Endothelial cell of umbilical vein (primary cell): ENCODE measurements at regions of chr1 and their contacts with region 1.

Region 1: DNA sequence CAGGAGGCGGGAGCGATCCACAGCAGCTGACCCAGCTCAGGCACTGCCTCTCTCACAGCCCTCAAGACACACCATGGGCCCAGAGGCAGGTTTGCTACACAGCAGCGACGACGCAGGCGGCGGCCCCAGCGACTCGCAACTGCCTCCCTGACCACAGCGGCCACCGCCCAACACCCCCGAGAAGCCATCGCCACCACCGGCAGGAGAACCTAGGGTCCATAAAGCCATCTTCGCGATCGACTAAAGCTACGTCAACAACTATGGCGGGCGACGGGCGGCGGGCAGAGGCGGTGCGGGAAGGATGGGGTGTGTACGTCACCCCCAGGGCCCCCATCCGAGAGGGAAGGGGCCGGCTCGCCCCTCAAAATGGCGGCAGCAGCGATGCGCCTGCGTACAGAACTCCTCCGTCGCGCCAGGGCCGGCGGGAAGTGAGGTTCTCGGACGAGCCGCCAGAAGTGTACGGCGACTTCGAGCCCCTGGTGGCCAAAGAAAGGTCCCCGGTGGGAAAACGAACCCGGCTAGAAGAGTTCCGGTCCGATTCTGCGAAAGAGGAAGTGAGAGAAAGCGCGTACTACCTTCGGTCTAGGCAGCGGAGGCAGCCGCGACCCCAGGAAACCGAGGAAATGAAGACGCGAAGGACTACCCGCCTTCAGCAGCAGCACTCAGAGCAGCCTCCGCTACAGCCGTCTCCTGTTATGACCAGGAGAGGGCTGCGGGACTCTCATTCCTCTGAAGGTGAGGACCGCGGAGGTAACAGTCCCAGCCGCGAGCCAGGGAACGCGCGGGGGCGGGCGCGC is at the start of gene TOR1AIP1:
- DNase-seq: peak; percentile 99
- H3K4me3 ChIP-seq: peak within 1 kb of the TSS; percentile 71 to 93 (median 76)
- H3K27ac ChIP-seq: peak within 1 kb of the TSS; percentile 91
- H3K4me1 ChIP-seq: peaks cover 15% of the 10 kb centered on the region
- H3K27me3 ChIP-seq: no peaks in the 10 kb centered on the region
- CTCF ChIP-seq: peak; percentile 11 to 45
- POLR2A ChIP-seq: peak; percentile 18
- total RNA-seq, gene TOR1AIP1: 28.8 and 30.2 TPM in 2 replicates

Region 2: GRCh38 chr1:179941454-179941853 is 59.0 kb after region 1 on chr1:
- CTCF ChIA-PET with region 1: no interaction called
- POLR2A ChIA-PET with region 1: no interaction called
- dilution Hi-C with region 1: no loop called
- intact Hi-C with region 1: no loop called
- DNase-seq: no peak
- H3K4me3 ChIP-seq: no peak overlapping the region
- H3K27ac ChIP-seq: no peak overlapping the region
- H3K4me1 ChIP-seq: no peaks in the 10 kb centered on the region
- H3K27me3 ChIP-seq: no peaks in the 10 kb centered on the region
- CTCF ChIP-seq: no peak
- POLR2A ChIP-seq: no peak

Region 3: GRCh38 chr1:179954493-179955297 is 72.3 kb after region 1 on chr1 and contains the start of gene CEP350:
- CTCF ChIA-PET with region 1: interaction called, 3 read pairs
- POLR2A ChIA-PET with region 1: interaction called, 4 read pairs
- dilution Hi-C with region 1: no loop called
- intact Hi-C with region 1: loop called (anchors 1 kb)
- DNase-seq: peak; percentile 99
- H3K4me3 ChIP-seq: peak within 1 kb of the TSS; percentile 88 to 95 (median 95)
- H3K27ac ChIP-seq: peak within 1 kb of the TSS; percentile 55
- H3K4me1 ChIP-seq: peaks cover 22% of the 10 kb centered on the region
- H3K27me3 ChIP-seq: no peaks in the 10 kb centered on the region
- CTCF ChIP-seq: no peak
- POLR2A ChIP-seq: peak; percentile 87
- total RNA-seq, gene CEP350: 30.1 and 30.3 TPM in 2 replicates

Region 4: DNA sequence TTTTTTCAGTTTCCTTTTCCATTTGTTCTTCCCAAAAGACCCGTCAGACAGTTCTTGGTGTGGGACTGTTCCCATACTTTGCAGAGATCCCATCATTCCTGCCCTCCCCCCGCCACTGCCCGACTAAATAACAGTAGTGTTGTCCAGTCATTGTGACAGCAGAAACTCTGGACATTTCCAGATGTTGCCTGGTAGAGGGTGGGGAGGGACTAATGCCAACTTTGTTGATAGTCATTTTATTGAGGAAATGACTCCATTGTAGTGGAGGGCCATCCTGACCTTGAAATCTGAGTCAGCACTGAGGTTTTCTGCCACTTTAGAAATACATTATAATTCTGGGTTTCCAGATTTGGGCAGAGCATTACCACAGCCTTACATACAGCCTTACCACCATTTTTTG is 157.6 kb after region 1 on chr1:
- CTCF ChIA-PET with region 1: no interaction called
- POLR2A ChIA-PET with region 1: no interaction called
- dilution Hi-C with region 1: no loop called
- intact Hi-C with region 1: loop called (anchors 1 kb)
- DNase-seq: peak; percentile 76
- H3K4me3 ChIP-seq: no peak overlapping the region
- H3K27ac ChIP-seq: peak overlapping the region; percentile 32
- H3K4me1 ChIP-seq: peaks cover 23% of the 10 kb centered on the region
- H3K27me3 ChIP-seq: no peaks in the 10 kb centered on the region
- CTCF ChIP-seq: no peak
- POLR2A ChIP-seq: no peak

Region 5: GRCh38 chr1:180168786-180169639 is 286.6 kb after region 1 on chr1:
- CTCF ChIA-PET with region 1: interaction called, 13 read pairs
- POLR2A ChIA-PET with region 1: interaction called, 4 read pairs
- dilution Hi-C with region 1: no loop called
- intact Hi-C with region 1: loop called (anchors 1 kb)
- DNase-seq: peak; percentile 51
- H3K4me3 ChIP-seq: no peak overlapping the region
- H3K27ac ChIP-seq: no peak overlapping the region
- H3K4me1 ChIP-seq: no peaks in the 10 kb centered on the region
- H3K27me3 ChIP-seq: no peaks in the 10 kb centered on the region
- CTCF ChIP-seq: peak; percentile 63 to 81
- POLR2A ChIP-seq: no peak

Region 6: DNA sequence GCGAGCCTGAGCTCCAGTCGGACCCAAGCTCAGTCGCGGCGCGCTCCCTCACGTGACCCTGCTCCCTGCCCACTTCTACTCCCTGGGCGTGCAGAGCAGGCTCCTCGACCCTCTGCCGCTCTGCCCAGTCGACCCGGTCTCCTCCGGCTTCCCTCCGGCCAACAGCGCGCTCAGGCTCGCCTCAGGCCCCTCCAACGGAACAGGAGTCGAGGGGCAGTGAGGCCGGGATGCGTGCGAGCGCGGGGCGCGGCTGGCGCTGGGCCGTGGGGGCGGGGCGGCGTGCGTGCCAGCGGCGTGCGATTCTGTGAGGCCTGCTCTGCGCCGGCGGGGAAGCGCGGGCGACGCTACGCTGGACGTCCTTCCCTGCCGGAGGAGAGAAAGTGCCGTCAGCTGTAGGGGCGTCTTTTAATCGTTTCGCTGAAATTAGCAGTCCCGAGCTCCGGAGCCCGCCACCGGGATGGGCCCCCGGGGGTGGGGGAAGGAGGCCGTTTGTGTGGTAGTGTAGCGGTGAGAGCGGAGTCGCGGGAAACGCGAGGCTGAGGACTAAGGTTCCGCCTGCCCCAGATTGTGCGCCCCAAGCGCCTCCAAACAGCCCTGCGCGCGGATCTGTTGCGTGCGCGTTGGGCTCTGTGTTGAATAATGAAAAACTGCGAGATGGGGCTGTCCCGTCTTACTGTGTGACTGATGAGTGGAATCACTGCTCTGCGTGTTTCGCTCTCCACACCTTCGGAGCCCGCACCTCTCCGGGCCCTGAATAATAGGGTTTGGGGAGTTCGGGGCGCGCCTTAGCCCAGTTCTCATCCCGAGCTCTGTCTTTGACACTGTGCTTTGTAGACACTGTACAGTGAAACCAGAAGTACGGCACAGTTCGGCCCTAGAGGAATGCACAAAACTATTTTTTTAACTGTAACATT is 620.2 kb after region 1 on chr1 and contains the start of gene ACBD6:
- CTCF ChIA-PET with region 1: no interaction called
- POLR2A ChIA-PET with region 1: no interaction called
- dilution Hi-C with region 1: no loop called
- intact Hi-C with region 1: loop called (anchors 5 kb)
- DNase-seq: peak; percentile 93
- H3K4me3 ChIP-seq: peak within 1 kb of the TSS; percentile 32 to 81 (median 81)
- H3K27ac ChIP-seq: peak within 1 kb of the TSS; percentile 60
- H3K4me1 ChIP-seq: peaks cover 26% of the 10 kb centered on the region
- H3K27me3 ChIP-seq: no peaks in the 10 kb centered on the region
- CTCF ChIP-seq: peak in 1 of 2 donors; percentile 15
- POLR2A ChIP-seq: peak; percentile 18
- total RNA-seq, gene ACBD6: 52.8 and 56.4 TPM in 2 replicates